ENCODE measurements at regions of chr2 and their contacts with region 1.

Region 1: DNA sequence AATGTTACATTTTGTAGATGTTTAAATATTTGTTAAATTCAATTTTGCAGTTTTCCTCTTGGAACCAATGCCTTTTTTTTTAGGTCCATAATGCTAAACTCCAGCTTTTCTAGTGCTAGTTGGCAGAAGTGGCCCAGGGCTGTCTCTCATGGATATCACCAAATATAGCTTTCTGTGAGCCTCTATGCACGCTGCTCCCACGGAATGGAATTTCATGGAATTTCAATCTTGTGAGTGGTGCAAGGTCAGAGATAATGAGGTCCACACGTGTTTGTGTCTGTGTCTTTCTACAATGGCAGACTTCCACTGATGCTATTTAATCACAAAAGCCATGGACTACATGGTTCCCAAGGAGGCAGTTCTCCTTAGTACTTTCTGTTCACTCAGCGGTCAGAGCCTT is 191.5 kb upstream of the PARD3B start:
- DNase-seq: no peak
- ATAC-seq: peak; percentile 26; the same call in 2 of the 3 replicates
- H3K4me3 ChIP-seq: no peak overlapping the region
- H3K27ac ChIP-seq: peak overlapping the region; percentile 93
- H3K4me1 ChIP-seq: peaks cover 0 to 24% of the 10 kb centered on the region in 2 experiments; a peak in 3 of 5 replicates
- H3K27me3 ChIP-seq: no peaks in the 10 kb centered on the region
- CTCF ChIP-seq: no peak
- EP300 ChIP-seq: no peak
- POLR2A ChIP-seq: no peak
- RAD21 ChIP-seq: no peak

Region 2: DNA sequence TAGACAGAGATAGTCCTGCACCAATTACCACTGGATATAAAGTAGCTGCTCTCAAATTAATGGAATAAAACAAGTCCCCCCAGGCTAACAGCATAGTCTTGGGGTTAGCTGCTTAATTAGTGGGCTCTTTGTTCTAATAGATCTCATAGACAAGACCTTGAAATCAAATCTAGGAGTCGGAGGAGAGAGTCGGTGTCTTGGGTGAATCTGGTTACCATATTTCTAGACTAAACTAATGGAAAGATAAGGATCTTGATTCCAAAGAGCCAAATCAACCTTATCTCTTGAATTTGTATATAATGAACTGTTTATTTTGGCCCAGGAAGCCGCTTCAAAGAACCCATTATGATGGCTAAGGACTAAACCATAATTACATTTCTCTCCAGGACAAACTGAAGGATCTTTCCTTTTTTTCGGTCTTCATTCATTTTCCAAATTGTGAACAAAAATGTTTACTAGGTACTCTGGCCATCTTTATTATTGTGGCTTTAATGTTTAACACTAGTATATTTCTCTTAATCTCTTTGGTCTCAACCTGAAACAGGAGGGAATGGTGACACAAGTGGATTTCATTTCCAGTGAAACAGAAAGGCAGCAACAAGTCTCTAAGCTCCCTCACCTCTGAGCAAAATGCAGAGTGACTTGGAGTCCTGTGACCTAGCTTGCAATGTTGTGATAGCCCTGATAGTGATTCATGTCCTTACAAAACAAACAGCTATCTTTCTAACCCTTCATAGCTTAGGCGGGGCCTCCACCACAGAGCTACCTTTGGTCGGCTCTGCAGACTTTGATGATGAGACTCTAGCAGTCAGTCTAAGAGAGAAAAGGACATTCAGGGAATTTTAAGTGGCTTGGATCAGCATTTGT is 53.6 kb after region 1 on chr2:
- CTCF ChIA-PET with region 1: no interaction called
- POLR2A ChIA-PET with region 1: no interaction called
- in situ Hi-C with region 1: no loop called
- intact Hi-C with region 1: loop called (anchors 5 kb)
- DNase-seq: peak; percentile 39 to 76 (median 54)
- ATAC-seq: peak; percentile 99
- H3K4me3 ChIP-seq: no peak overlapping the region
- H3K27ac ChIP-seq: peak overlapping the region; percentile 56
- H3K4me1 ChIP-seq: peaks cover 0 to 14% of the 10 kb centered on the region in 2 experiments; a peak in 4 of 5 replicates
- H3K27me3 ChIP-seq: no peaks in the 10 kb centered on the region
- CTCF ChIP-seq: no peak
- EP300 ChIP-seq: peak; percentile 75; the same call in 1 of the 2 replicates
- POLR2A ChIP-seq: no peak; the same call in 1 of the 2 replicates
- RAD21 ChIP-seq: peak in 1 of 2 experiments; percentile 19; a peak in 1 of 4 replicates

Region 3: DNA sequence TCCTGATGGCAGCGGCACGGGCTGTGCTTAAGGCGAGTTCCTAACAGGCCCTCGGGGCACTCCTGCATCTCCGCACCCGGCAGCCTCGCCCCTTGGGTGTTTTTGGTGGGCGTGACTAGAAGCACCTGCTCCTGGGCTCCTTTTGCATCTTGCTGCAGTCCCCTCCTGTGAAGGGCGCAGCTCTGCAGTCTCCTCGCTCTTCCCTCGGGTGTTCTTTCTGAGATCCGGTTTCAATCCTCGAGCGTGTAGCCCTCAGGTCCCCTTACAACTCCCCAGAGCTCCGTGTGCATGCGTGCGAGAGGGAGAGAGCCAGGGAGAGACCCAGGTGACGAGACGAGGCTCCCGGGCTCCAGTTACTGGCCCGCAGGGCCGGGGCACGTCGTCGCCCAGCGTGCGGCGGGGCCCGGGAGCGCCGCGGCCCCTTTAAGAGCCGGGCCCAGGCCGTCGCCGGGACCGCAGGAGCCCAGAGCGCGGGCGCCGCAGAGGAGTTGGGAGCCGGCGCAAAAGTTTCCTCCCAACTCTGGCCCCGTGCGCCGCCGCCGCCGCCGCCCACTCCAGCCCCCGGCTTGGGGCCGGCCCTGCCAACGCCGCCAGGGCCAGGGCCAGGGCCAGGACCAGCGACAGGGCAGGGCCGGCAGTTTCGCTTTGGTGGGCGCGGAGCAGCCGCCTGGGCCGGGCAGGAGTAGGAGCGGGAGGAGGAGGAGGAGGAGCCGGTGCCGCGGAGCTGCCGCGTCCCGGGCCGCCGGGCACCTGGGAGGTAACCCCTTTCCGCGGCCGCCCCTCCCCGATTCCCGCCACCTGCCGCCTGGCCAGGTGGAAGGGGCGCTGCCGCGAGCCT is 191.4 kb after region 1 on chr2 and contains the start of gene PARD3B:
- CTCF ChIA-PET with region 1: no interaction called
- POLR2A ChIA-PET with region 1: no interaction called
- in situ Hi-C with region 1: no loop called
- intact Hi-C with region 1: loop called (anchors 10 kb)
- DNase-seq: peak; percentile 8 to 32 (median 16)
- ATAC-seq: peak; percentile 92
- H3K4me3 ChIP-seq: peak within 1 kb of the TSS; percentile 47
- H3K27ac ChIP-seq: peak within 1 kb of the TSS; percentile 55; the same call in 2 of the 3 replicates
- H3K4me1 ChIP-seq: peaks cover 7 to 18% of the 10 kb centered on the region in 2 experiments; a peak in 4 of 5 replicates
- H3K27me3 ChIP-seq: no peaks in the 10 kb centered on the region
- CTCF ChIP-seq: no peak
- EP300 ChIP-seq: no peak
- POLR2A ChIP-seq: no peak
- RAD21 ChIP-seq: no peak
- polyA plus RNA-seq, gene PARD3B: 0.34 to 0.56 TPM

Region 4: GRCh38 chr2:204604061-204604460 is 250.2 kb after region 1 on chr2:
- CTCF ChIA-PET with region 1: no interaction called
- POLR2A ChIA-PET with region 1: no interaction called
- in situ Hi-C with region 1: no loop called
- intact Hi-C with region 1: no loop called
- DNase-seq: no peak
- ATAC-seq: no peak
- H3K4me3 ChIP-seq: no peak overlapping the region
- H3K27ac ChIP-seq: no peak overlapping the region
- H3K4me1 ChIP-seq: no peaks in the 10 kb centered on the region
- H3K27me3 ChIP-seq: no peaks in the 10 kb centered on the region
- CTCF ChIP-seq: no peak
- EP300 ChIP-seq: no peak
- POLR2A ChIP-seq: no peak
- RAD21 ChIP-seq: no peak

Region 5: DNA sequence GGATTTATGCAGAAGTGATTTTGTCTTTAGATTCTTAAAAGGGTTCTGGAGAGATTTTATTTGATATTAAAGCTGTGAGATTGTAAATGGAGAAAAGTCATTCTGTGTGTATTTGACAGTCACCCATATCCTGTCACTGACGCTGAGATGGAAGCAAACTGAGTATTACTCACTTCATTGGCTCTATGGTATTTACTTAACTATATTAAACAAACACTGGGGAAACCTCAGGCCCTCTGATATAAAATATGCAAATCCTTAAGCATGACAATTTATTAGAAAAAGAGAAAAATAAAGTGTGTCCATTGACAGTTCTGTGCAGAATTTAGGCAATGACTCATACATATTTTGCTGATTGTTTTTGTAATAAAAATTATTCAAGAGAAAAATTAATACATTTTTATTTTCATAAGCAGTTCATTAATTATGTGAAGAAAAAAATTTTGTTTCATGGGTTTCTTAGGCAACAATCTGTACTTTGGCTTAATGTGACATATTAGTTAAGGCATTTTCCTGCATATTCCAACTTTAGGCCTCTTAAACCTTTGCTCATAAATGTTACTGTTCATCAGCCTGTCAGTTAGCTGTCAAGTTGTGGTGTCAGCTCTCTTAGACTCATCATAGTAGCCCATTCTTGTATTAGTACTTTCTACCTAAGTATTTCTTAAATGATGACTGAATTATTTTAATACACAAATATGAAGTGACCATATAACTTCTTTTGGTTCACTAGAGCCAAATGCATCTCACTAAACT is 291.4 kb after region 1 on chr2:
- CTCF ChIA-PET with region 1: no interaction called
- POLR2A ChIA-PET with region 1: no interaction called
- in situ Hi-C with region 1: no loop called
- intact Hi-C with region 1: no loop called
- DNase-seq: no peak
- ATAC-seq: no peak
- H3K4me3 ChIP-seq: no peak overlapping the region
- H3K27ac ChIP-seq: no peak overlapping the region
- H3K4me1 ChIP-seq: no peaks in the 10 kb centered on the region
- H3K27me3 ChIP-seq: no peaks in the 10 kb centered on the region
- CTCF ChIP-seq: no peak
- EP300 ChIP-seq: no peak
- POLR2A ChIP-seq: no peak
- RAD21 ChIP-seq: no peak